ENCODE measurements at regions of chr15 and their contacts with region 1.

Region 1: GRCh38 chr15:52331490-52332240 is 36.1 kb upstream of the MYO5C start:
- DNase-seq: no peak
- H3K4me3 ChIP-seq: no peak overlapping the region
- H3K27ac ChIP-seq: no peak overlapping the region
- H3K4me1 ChIP-seq: peaks cover 0 to 3% (median 0%) of the 10 kb centered on the region in 4 experiments; a peak in 1 of 7 replicates
- H3K27me3 ChIP-seq: no peaks in the 10 kb centered on the region
- CTCF ChIP-seq: peak in 2 of 3 experiments; percentile 34 to 54; a peak in 2 of 4 replicates
- EP300 ChIP-seq: no peak
- POLR2A ChIP-seq: no peak
- RAD21 ChIP-seq: peak; percentile 79

Region 2: DNA sequence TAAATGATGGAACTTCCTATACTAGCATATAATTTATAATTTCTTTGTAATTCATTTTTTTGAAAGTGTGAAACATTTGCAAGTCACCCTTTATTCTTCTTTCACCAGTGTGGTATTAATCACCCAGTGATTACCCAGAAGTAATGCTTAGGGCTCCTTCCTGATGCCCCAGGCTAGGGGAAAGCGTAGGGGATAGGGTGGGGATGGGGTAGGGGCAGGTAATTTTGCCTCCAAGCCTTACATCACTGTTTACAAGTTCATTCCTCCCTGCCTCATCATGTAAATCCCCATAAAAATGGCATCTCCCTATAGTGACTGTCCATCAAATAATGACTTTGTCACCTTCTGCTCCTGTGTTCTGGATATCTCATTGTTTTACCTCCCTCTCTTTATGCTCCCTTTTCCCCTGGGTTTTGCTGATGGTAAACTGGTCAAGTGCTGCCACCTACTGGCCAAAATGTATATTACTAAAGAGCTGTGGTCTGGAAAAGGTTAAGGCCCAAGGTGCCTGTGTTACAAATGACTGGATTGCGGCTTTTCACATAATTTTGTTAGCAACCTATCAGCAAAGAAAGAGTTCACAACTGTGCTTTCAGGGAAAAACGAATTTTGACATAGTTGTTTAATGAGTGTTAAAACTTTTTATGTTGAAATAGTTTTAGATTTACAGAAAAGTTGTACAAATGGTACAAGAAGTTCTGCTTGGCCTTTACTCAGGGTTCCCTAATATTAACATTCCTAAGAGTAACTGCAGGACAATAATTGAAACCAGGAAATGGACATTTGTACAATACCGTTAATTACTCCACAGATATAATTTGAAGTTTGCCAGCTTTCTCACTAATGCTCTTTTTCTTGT is 403.8 kb after region 1 on chr15:
- CTCF ChIA-PET with region 1: interaction called, 11 read pairs
- POLR2A ChIA-PET with region 1: no interaction called
- DNase-seq: peak; percentile 25 to 86
- H3K4me3 ChIP-seq: no peak overlapping the region
- H3K27ac ChIP-seq: no peak overlapping the region
- H3K4me1 ChIP-seq: peaks cover 0 to 6% (median 1%) of the 10 kb centered on the region in 4 experiments; a peak in 4 of 7 replicates
- H3K27me3 ChIP-seq: no peaks in the 10 kb centered on the region
- CTCF ChIP-seq: peak in 2 of 3 experiments; percentile 75 to 85; a peak in 3 of 4 replicates
- EP300 ChIP-seq: no peak
- POLR2A ChIP-seq: no peak
- RAD21 ChIP-seq: peak; percentile 97 to 98